ENCODE measurements at regions of chr6 and their contacts with region 1.

Region 1: DNA sequence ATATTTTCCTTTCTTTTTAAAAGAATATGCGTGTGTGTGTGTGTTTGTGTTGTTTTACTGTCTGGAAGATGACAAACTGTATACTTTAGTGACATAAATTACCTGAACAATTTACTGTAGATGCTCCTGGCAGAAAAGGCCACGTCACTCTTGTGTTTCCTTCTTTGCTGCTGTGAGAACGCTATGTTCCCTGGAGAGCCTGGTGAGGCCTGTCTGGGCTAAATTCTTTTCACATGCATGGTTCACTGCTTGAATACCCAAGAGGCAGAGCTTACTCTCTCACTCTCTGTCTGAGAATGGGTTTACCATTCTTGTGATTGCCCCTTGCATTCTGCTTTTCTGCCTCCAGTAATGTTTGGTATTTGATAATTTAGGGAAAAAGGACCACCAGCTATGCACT is 64.3 kb downstream of the EDN1 start:
- DNase-seq: peak; percentile 91
- ATAC-seq: peak; percentile 77
- H3K4me3 ChIP-seq: no peak overlapping the region
- H3K27ac ChIP-seq: peak overlapping the region; percentile 56
- H3K4me1 ChIP-seq: peaks cover 47% of the 10 kb centered on the region
- H3K27me3 ChIP-seq: no peaks in the 10 kb centered on the region
- CTCF ChIP-seq: no peak
- EP300 ChIP-seq: peak; percentile 43 to 56; a peak in 2 of 4 replicates
- POLR2A ChIP-seq: no peak
- RAD21 ChIP-seq: no peak

Region 2: GRCh38 chr6:12296255-12296573 is 58.3 kb before region 1 on chr6:
- CTCF ChIA-PET with region 1: interaction called, 122 read pairs
- POLR2A ChIA-PET with region 1: interaction called, 8 read pairs
- RAD21 ChIA-PET with region 1: interaction called, 206 read pairs
- SMC1A ChIA-PET with region 1: interaction called, 189 read pairs
- in situ Hi-C with region 1: no loop called
- intact Hi-C with region 1: no loop called
- DNase-seq: no peak
- ATAC-seq: no peak
- H3K4me3 ChIP-seq: no peak overlapping the region
- H3K27ac ChIP-seq: no peak overlapping the region
- H3K4me1 ChIP-seq: peaks cover 8% of the 10 kb centered on the region
- H3K27me3 ChIP-seq: no peaks in the 10 kb centered on the region
- CTCF ChIP-seq: no peak
- EP300 ChIP-seq: no peak
- POLR2A ChIP-seq: no peak
- RAD21 ChIP-seq: no peak

Region 3: GRCh38 chr6:12343440-12344162 is 10.9 kb before region 1 on chr6:
- CTCF ChIA-PET with region 1: interaction called, 4 read pairs
- POLR2A ChIA-PET with region 1: interaction called, 7 read pairs
- RAD21 ChIA-PET with region 1: interaction called, 13 read pairs
- SMC1A ChIA-PET with region 1: interaction called, 21 read pairs
- in situ Hi-C with region 1: no loop called
- intact Hi-C with region 1: no loop called
- DNase-seq: no peak
- ATAC-seq: no peak
- H3K4me3 ChIP-seq: no peak overlapping the region
- H3K27ac ChIP-seq: no peak overlapping the region
- H3K4me1 ChIP-seq: no peaks in the 10 kb centered on the region
- H3K27me3 ChIP-seq: no peaks in the 10 kb centered on the region
- CTCF ChIP-seq: no peak
- EP300 ChIP-seq: no peak
- POLR2A ChIP-seq: no peak
- RAD21 ChIP-seq: no peak

Region 4: DNA sequence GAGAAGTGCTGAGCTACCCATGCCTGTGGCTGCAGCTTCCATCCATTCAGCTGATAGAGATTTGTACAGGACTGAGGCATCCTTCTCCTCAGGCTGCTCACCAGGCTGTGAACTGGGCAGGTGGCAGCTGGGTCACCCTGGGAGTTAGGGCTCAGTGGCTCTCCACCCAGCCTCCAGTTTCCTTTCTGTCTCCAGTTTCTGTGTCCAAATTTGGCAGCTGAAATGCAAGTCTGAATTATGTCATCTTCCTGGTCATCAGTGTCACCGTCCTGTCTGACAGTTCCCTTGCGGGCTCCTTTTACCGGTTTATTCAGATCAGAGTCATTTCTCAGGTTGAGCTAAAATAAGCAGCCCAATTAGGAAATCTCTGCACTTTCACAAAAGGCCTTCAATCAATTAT is 28.9 kb after region 1 on chr6:
- CTCF ChIA-PET with region 1: no interaction called
- POLR2A ChIA-PET with region 1: interaction called, 4 read pairs
- RAD21 ChIA-PET with region 1: interaction called, 10 read pairs
- SMC1A ChIA-PET with region 1: interaction called, 10 read pairs
- in situ Hi-C with region 1: no loop called
- intact Hi-C with region 1: loop called (anchors 2 kb)
- DNase-seq: peak; percentile 72
- ATAC-seq: peak; percentile 98
- H3K4me3 ChIP-seq: no peak overlapping the region
- H3K27ac ChIP-seq: no peak overlapping the region
- H3K4me1 ChIP-seq: peaks cover 11% of the 10 kb centered on the region
- H3K27me3 ChIP-seq: no peaks in the 10 kb centered on the region
- CTCF ChIP-seq: no peak
- EP300 ChIP-seq: peak; percentile 65 to 72; a peak in 2 of 4 replicates
- POLR2A ChIP-seq: no peak
- RAD21 ChIP-seq: no peak